ENCODE measurements at regions of chr10 and their contacts with region 1.

Region 1: DNA sequence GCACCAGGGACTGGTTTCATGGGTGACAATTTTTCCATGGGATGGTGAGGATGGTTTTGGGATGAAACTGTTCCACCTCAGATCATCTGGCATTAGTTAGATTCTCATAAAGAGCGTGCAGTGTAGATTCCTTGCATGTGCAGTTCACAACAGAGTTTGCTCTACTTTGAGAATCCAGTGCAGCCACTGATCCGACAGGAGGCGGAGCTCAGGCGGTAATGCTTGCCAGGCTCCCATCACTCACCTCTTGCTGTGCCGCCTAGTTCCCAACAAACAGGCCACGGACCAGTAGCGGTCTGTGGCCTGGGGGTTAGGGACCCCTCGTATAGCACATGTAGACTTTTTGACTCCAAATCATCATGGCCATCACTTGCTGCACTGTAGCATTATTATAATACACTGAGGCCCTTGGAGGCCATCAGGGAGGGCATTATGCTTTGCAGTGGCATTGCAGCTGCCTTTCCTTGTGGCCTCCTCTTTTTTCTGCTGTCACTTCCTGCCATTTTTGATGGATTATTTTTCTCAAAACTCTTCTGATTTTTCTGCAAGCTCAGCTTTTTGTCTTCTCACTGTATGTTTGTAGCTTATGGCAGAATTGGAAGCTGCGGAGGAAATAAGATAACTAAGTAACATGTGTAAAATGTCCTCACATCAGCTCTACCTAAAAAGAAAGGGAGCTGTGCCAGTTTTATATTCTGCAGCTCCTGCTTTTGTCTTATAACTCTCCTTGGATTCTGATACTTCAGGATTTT is 18.5 kb downstream of the CSGALNACT2 start:
- DNase-seq: no peak
- H3K4me3 ChIP-seq: no peak overlapping the region
- H3K27ac ChIP-seq: no peak overlapping the region
- H3K4me1 ChIP-seq: no peaks in the 10 kb centered on the region
- H3K27me3 ChIP-seq: no peaks in the 10 kb centered on the region
- CTCF ChIP-seq: no peak

Region 2: DNA sequence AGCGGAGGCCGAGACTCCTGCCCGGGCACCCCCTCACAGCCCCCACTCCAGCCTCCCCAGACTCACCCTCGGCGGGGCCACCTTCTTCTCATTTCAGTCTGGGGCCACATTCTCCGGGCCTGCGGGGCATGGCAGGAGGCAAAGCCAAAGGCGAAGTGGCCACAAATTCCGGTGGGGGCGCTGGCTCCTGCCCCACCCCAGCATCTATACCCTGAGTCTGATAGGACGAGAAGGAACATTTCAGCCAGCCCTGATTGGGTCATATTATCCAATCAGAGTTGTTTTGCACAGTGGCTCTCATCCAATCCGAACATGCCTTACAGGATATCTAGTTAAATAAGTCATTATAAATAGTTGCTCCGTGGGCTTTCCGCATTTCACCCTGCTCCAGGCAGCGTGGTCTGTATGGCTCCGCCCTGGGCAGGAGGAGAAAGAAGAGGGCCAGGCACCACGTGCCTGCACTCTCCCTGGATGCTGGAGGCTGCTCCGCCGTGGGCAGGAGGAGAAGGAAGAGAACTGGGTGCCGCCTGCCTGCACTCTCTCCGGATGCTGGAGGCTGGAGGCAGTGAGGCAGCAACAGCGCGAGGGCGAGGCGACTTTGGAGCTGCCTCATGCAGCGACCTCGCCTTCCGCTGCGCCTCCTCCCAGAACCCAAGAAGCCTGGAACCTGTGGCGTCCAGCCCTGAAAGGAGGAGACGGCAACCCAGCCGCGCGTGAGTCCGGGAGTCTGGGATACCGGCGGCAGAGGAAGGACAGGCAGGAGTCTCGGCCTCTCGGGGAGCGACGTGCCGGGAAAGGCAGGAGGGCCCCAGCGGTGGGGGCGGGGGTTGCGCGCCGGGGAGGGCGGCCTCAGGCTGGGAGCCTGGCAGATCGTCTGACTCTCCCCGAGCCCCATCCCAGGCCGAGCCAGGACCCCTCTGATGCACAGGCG is 681.3 kb before region 1 on chr10:
- CTCF ChIA-PET with region 1: no interaction called
- POLR2A ChIA-PET with region 1: no interaction called
- intact Hi-C with region 1: no loop called
- DNase-seq: no peak
- H3K4me3 ChIP-seq: no peak overlapping the region
- H3K27ac ChIP-seq: no peak overlapping the region
- H3K4me1 ChIP-seq: no peaks in the 10 kb centered on the region
- H3K27me3 ChIP-seq: peaks cover 2% of the 10 kb centered on the region; the same call in 1 of the 2 replicates
- CTCF ChIP-seq: no peak

Region 3: DNA sequence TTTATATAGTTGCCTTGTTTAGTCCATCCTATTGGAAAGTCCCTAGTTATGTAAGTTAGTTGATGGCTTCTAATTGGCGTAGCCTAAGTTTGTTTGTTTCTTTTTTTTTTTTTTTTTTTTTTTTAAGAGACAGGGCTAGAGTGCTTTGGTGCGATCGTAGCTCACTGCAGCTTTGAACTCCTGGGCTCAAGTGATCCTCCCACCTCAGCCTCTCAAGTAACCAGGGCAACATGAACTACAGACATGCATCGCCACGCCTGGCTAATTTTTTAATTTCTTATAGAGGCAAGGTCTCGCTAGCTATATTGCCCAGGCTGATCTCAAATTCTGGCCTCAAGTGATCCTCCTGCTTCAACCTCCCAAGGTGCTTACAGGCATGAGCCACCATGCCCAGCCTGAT is 11.5 kb before region 1 on chr10:
- CTCF ChIA-PET with region 1: no interaction called
- POLR2A ChIA-PET with region 1: interaction called, 11 read pairs
- intact Hi-C with region 1: no loop called
- DNase-seq: no peak
- H3K4me3 ChIP-seq: no peak overlapping the region
- H3K27ac ChIP-seq: no peak overlapping the region
- H3K4me1 ChIP-seq: peaks cover 7% of the 10 kb centered on the region
- H3K27me3 ChIP-seq: no peaks in the 10 kb centered on the region
- CTCF ChIP-seq: no peak

Measured in PC-9 (cell line).